A549 (cell line): ENCODE measurements at regions of chr16 and their contacts with region 1.

Region 1: DNA sequence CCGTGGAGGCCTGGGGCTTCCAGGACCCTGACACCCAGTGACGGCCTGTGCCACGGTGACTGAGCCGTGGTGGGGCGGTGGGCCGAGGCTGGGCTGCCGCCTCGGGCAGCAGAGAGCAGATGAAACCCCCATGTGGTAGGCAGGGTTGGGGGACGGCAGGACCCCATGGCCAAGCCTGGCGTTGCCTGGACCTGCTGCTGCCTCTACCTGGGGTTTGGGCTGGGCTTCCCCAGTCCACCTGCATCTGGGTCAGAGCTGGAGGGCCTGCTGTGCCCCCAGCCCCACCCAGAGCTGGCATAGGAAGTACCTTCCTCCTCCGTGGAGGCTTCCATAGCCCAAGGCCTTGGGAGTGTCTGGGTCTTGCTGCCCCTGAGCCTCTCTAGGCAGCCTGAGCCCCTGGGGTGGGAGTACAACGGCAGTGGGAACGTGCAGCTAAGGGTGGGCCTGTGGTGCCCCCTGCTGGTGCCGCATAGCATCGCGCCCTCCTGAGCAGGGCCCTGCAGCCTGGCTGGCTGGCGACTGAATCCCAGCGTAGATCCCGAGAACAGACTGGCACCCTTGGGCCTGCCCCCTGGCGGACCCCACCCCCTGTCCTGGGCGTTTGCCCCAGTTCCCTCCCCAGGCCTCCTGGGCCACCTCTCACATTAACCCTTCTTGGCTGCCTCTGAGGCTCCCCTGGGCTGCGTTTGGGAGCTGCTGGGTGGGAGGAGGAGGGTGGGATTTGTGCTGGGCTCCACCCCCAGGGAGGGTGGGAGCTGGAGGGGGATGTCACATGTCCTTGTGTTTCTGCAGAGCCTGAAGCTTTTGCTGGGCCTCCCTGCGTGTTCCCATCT is 12.6 kb upstream of the ATP6V0C start:
- DNase-seq: peak; percentile 82 to 83
- ATAC-seq: peak; percentile 87 to 95
- H3K4me3 ChIP-seq: no peak overlapping the region
- H3K27ac ChIP-seq: peak overlapping the region; percentile 36 to 65; a peak in 3 of 6 replicates
- H3K4me1 ChIP-seq: peaks cover 28% of the 10 kb centered on the region
- CTCF ChIP-seq: peak; percentile 92
- EP300 ChIP-seq: no peak
- POLR2A ChIP-seq: no peak
- RAD21 ChIP-seq: peak; percentile 93 to 95

Region 2: GRCh38 chr16:2194852-2195321 is 306.2 kb before region 1 on chr16:
- CTCF ChIA-PET with region 1: interaction called, 31 read pairs
- POLR2A ChIA-PET with region 1: interaction called, 3 read pairs
- DNase-seq: peak; percentile 69 to 82
- ATAC-seq: peak; percentile 64 to 88
- H3K4me3 ChIP-seq: no peak overlapping the region
- H3K27ac ChIP-seq: no peak overlapping the region
- H3K4me1 ChIP-seq: peaks cover 18% of the 10 kb centered on the region
- CTCF ChIP-seq: peak; percentile 74
- EP300 ChIP-seq: no peak
- POLR2A ChIP-seq: no peak
- RAD21 ChIP-seq: peak; percentile 77 to 87

Region 3: DNA sequence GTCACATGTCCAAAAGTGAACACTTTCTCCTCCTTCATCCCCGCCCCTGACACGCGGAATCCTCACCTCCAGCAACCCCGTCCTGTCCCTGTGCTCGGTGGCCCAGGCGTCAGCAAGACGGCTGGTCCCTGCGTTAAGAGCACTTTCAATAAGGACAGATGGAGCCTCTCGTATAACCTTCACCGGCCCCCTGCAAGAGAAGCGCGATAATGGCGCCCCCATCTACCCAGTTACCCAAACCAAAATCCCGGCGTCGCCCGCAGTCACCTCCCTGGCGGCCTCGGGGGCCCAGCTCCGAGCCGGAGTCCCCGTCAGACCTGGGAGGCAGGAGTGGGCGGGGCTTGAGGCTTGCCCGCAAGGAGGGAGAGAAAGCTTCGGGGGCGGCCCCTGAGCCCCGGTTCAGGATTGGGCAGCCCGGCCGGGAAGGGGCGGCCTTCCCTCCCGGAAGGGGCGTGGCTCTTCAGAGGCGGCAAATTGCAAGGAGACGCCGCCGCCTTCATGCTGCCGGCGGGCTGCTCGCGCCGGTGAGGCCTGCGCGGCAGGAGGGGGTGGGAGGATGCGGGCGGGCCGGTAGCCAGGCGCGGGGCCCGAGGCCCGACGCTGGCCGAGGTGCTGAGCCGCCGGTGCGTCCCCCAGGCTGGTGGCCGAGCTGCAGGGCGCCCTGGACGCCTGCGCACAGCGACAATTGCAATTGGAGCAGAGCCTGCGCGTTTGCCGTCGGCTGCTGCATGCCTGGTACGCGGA is 41.3 kb before region 1 on chr16 and contains the start of gene TEDC2:
- CTCF ChIA-PET with region 1: interaction called, 40 read pairs
- POLR2A ChIA-PET with region 1: interaction called, 4 read pairs
- DNase-seq: peak; percentile 92 to 96
- ATAC-seq: peak; percentile 88 to 94
- H3K4me3 ChIP-seq: peak within 1 kb of the TSS; percentile 52
- H3K27ac ChIP-seq: peak within 1 kb of the TSS; percentile 72 to 92
- H3K4me1 ChIP-seq: peaks cover 11% of the 10 kb centered on the region; the same call in 1 of the 3 replicates
- CTCF ChIP-seq: no peak
- EP300 ChIP-seq: no peak
- POLR2A ChIP-seq: peak; percentile 22; the same call in 1 of the 2 replicates
- RAD21 ChIP-seq: no peak
- polyA plus RNA-seq, gene TEDC2: 9.5 and 9.6 TPM in 2 replicates

Region 4: GRCh38 chr16:2474877-2475412 is 26.2 kb before region 1 on chr16 and contains the start of gene TBC1D24:
- CTCF ChIA-PET with region 1: interaction called, 98 read pairs
- POLR2A ChIA-PET with region 1: no interaction called
- DNase-seq: peak; percentile 78 to 97
- ATAC-seq: peak; percentile 66 to 87
- H3K4me3 ChIP-seq: peak within 1 kb of the TSS; percentile 98
- H3K27ac ChIP-seq: peak within 1 kb of the TSS; percentile 97 to 99
- H3K4me1 ChIP-seq: peaks cover 25% of the 10 kb centered on the region
- CTCF ChIP-seq: no peak
- EP300 ChIP-seq: no peak
- POLR2A ChIP-seq: peak; percentile 91
- RAD21 ChIP-seq: no peak
- polyA plus RNA-seq, gene TBC1D24: 4.0 and 4.2 TPM in 2 replicates

Region 5: DNA sequence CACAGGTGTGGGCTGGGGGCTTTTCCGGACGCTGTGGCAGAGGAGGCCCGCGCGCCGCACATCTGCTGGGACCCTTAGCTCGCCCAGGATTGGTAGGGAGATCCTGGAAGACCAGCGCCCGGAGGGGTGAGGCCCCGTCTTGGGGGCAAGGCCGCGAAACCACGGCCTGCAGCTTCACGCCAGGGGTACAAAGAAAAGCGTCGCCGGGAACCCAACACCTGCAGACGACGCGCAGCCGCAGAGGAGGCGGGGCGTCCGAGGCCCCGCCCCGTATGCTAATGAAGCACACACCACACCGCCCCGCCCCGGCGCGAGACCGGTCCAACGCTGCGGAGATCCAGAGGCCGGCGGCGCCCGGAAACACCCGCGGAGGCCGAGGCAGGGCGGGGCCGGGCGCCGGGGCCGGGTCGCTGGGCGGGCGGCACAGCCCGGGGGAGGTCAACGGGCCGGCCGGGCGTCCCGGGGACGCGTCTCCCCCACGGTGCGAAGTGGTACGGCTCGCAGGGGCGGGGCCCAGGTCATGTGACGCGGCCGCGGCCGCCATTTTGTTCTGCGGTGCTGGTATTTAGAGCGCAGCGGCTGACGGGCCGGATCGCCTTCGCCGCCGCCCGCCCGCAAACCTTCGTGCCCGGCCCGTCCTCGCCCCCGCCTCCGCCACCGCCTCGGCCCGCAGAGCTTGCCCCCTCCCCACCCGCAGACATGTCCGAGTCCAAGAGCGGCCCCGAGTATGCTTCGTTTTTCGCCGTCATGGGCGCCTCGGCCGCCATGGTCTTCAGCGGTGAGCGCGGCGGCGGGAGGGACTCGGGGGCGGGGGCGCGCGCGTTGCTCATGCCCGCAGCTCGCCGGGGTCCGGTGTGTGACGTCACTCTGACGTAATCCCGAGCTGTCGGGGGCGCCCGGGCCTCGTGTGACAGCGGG is 12.5 kb after region 1 on chr16 and contains the start of gene ATP6V0C:
- CTCF ChIA-PET with region 1: interaction called, 91 read pairs
- POLR2A ChIA-PET with region 1: interaction called, 3 read pairs
- DNase-seq: peak; percentile 86
- ATAC-seq: peak; percentile 67 to 87
- H3K4me3 ChIP-seq: peak within 1 kb of the TSS; percentile 84
- H3K27ac ChIP-seq: peak within 1 kb of the TSS; percentile 98 to 99
- H3K4me1 ChIP-seq: peaks cover 29% of the 10 kb centered on the region
- CTCF ChIP-seq: no peak
- EP300 ChIP-seq: no peak
- POLR2A ChIP-seq: peak; percentile 90
- RAD21 ChIP-seq: no peak
- polyA plus RNA-seq, gene ATP6V0C: 9.4 and 14.7 TPM in 2 replicates